Tibial artery (tissue), 4 donors: ENCODE measurements at regions of chr14 and their contacts with region 1.

Region 1: DNA sequence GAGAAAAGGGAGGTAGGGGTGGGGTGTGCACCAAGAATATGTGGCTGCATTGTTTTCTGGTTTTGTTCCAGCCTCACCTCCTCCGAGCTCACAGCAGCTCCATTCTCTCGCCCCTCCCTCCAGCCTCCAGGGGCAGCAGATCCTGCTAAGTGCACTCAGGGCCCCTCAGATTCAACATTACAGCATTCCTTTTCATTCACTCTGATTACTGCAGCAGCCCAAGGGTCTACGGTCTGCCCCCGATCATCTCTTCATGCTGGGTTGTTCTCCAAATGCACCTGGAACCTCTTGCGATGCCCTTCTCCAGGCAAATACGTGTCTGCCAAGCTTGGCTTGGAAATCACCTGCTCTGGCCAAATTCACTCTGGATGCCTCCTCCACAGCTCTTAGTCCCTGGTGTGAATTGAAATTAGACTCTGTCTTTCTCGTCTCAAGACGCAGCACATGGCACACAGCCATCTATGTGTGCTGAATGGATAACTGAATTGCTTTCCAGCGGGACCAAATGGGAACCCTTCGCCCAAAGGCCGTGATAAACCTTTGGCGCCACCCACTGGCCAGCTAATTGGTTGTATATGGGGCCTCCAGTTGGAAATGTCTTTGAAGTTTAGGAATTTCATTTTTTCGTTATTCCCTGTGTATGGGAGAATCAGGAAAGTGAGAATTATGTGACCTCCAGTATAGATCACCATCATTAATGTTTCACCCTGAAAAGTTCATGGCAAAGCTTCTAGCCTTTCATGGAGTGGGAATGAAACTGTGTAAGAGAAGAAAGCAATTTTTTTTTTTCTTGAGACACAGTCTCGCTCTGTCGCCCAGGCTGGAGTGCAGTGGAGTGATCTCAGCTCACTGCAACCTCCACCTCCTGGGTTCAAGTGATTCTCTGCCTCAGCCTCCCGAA is 9.6 kb upstream of the HSP90AA1 start:
- DNase-seq: peak; percentile 87 to 90
- H3K4me3 ChIP-seq: no peak overlapping the region
- H3K27ac ChIP-seq: no peak overlapping the region
- H3K4me1 ChIP-seq: peaks cover 0 to 9% (median 2%) of the 10 kb centered on the region in 4 donors
- H3K27me3 ChIP-seq: no peaks in the 10 kb centered on the region
- CTCF ChIP-seq: peak; percentile 67 to 75

Region 2: DNA sequence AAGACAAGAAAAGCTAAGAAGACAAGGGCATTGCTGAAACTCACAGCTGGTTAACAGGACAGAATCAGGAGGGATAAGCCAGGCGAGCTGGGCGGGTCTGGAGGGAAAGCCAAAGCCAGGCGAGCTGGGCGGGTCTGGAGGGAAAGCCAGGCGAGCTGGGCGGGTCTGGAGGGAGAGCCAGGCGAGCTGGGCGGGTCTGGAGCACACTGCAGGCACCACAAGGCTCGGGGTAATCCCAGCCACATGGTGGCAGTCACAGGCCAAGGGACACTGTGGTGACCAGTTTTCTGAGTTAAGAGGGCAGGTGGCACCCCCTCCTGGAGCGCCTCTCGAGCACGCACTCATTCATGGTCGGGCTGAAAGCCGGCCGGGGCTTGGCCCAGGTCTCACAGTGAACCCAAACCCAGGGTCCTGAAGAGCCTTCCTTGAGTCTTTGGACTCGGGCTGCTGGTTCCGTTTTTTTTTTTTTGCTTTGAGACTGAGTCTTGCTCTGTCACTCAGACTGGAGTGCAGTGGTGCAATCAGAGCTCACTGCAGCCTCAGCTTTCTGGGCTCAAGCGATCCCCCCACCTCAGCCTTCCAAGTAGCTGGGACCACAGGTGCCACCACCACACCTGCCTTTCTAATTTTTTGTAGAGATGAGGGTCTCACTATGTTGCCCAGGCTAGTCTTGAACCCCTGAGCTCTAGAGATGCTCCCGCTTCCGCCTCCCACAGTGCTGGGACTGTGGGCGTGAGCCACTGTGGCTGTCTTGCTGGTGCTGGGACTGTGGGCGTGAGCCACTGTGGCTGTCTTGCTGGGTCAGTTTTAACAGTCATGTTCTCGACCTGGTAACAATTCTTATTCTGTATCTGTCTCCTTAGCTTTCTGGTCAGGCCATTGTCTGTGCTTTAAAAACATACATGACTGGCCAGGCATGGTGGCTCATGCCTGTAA is 49.9 kb before region 1 on chr14:
- intact Hi-C with region 1: loop called (anchors 5 kb)
- DNase-seq: peak; percentile 87 to 95
- H3K4me3 ChIP-seq: no peak overlapping the region
- H3K27ac ChIP-seq: peak overlapping the region in 1 of 2 donors; percentile 49
- H3K4me1 ChIP-seq: peaks cover 0 to 9% (median 7%) of the 10 kb centered on the region in 4 donors
- H3K27me3 ChIP-seq: no peaks in the 10 kb centered on the region
- CTCF ChIP-seq: peak; percentile 56 to 59

Region 3: DNA sequence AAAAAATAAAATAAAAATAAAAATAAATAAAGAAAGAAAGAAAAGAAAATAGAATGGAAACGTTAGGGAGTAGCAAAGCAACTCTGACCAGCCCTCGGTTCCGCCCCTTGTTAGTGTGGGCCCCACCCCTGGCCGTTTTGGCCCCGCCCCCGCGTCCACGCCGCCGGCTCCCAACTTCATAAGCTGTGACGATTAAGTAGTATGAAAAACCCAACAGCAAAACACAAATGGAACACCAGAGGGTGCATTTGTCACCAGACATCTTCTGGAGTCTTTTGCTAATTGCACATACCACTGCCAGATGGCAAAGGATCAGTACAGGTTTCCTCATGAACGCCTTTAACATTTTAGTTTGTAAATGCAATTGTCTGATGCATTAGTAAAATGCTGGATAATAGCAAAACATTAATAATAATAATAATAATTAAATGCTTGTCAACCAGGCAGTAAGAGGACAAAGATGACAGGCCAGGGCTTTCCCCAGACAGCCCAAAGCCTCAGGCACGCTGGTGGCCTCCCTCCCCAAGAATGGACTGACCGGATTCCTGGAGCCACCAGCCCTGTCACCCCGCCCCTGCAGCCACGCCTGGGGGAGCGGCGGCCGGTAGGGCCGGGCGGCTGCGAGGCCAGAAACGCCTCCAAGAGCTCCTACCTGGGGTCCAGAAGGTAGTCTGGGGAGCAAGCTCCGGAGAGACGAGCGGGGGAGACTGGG is 33.2 kb before region 1 on chr14:
- intact Hi-C with region 1: loop called (anchors 5 kb)
- DNase-seq: peak; percentile 87 to 88
- H3K4me3 ChIP-seq: no peak overlapping the region
- H3K27ac ChIP-seq: peak overlapping the region in 1 of 2 donors; percentile 19
- H3K4me1 ChIP-seq: peaks cover 0 to 15% (median 11%) of the 10 kb centered on the region in 4 donors
- H3K27me3 ChIP-seq: peaks cover 0 to 2% of the 10 kb centered on the region in 2 donors
- CTCF ChIP-seq: peak; percentile 43 to 51

Region 4: GRCh38 chr14:102182190-102182589 is 85.7 kb after region 1 on chr14:
- intact Hi-C with region 1: no loop called
- DNase-seq: no peak
- H3K4me3 ChIP-seq: no peak overlapping the region
- H3K27ac ChIP-seq: no peak overlapping the region
- H3K4me1 ChIP-seq: peaks cover 0 to 28% (median 14%) of the 10 kb centered on the region in 4 donors
- H3K27me3 ChIP-seq: no peaks in the 10 kb centered on the region
- CTCF ChIP-seq: no peak